Dorsolateral prefrontal cortex (tissue), 120 donors: ENCODE measurements at regions of chr1 and their contacts with region 1.

Region 1: GRCh38 chr1:107782217-107782845 is 182.6 kb downstream of the VAV3 start:
- DNase-seq: peak in 1 of 10 donors; percentile 16
- H3K4me3 ChIP-seq: no peak overlapping the region
- H3K27ac ChIP-seq: peak overlapping the region in 5 of 59 donors; percentile 3 to 31 (median 10)
- H3K27me3 ChIP-seq: no peaks in the 10 kb centered on the region
- CTCF ChIP-seq: peak; percentile 72 to 96 (median 85)

Region 2: DNA sequence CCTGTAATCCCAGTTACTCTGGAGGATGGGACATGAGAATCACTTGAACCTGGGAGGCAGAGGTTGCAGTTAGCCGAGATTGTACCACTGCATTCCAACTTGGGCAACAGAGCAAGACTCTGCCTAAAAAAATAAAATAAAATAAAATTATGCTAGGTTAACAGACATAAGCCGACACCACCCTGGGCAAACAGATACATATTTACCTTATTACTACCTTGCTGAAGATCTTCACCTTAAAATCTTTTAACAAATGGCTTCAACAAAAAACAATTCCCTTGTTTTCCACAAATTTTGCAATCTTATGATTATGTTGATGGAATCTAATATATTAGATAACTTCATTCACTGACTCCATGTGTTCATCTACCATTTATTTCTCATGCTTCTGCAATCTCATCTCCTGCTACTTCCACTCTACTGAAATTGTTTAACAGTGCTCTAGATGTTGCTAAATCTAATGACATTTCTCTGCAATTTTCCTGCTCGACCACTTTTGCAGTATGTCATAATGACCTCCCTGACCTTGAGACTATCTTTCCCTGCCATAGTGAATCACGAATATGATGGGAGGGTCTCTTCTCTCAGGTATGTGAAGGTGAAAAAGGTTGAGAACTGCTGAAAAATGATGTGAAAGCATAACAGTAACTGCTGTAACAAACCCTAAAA is 72.0 kb after region 1 on chr1:
- intact Hi-C with region 1: no loop called
- DNase-seq: no peak
- H3K4me3 ChIP-seq: no peak overlapping the region
- H3K27ac ChIP-seq: no peak overlapping the region
- H3K27me3 ChIP-seq: peaks cover 0 to 4% (median 0%) of the 10 kb centered on the region in 45 donors
- CTCF ChIP-seq: no peak

Region 3: GRCh38 chr1:108125312-108126138 is 343.2 kb after region 1 on chr1:
- intact Hi-C with region 1: loop called (anchors 2 kb)
- DNase-seq: peak in 8 of 10 donors; percentile 34 to 71 (median 64)
- H3K4me3 ChIP-seq: no peak overlapping the region
- H3K27ac ChIP-seq: peak overlapping the region in 1 of 59 donors; percentile 53
- H3K27me3 ChIP-seq: no peaks in the 10 kb centered on the region
- CTCF ChIP-seq: peak; percentile 80 to 98 (median 94)